Ascending aorta (tissue), 2 donors: ENCODE measurements at regions of chr7 and their contacts with region 1.

Region 1: GRCh38 chr7:90346336-90347125 is at the start of gene GTPBP10:
- DNase-seq: peak; percentile 60 to 95
- H3K4me3 ChIP-seq: peak within 1 kb of the TSS; percentile 69 to 74
- H3K27ac ChIP-seq: peak within 1 kb of the TSS; percentile 70 to 86
- H3K4me1 ChIP-seq: peaks cover 3 to 8% of the 10 kb centered on the region in 2 donors
- H3K27me3 ChIP-seq: no peaks in the 10 kb centered on the region
- CTCF ChIP-seq: peak; percentile 58 to 84 (median 80)
- total RNA-seq, gene GTPBP10: 4.5 TPM

Region 2: DNA sequence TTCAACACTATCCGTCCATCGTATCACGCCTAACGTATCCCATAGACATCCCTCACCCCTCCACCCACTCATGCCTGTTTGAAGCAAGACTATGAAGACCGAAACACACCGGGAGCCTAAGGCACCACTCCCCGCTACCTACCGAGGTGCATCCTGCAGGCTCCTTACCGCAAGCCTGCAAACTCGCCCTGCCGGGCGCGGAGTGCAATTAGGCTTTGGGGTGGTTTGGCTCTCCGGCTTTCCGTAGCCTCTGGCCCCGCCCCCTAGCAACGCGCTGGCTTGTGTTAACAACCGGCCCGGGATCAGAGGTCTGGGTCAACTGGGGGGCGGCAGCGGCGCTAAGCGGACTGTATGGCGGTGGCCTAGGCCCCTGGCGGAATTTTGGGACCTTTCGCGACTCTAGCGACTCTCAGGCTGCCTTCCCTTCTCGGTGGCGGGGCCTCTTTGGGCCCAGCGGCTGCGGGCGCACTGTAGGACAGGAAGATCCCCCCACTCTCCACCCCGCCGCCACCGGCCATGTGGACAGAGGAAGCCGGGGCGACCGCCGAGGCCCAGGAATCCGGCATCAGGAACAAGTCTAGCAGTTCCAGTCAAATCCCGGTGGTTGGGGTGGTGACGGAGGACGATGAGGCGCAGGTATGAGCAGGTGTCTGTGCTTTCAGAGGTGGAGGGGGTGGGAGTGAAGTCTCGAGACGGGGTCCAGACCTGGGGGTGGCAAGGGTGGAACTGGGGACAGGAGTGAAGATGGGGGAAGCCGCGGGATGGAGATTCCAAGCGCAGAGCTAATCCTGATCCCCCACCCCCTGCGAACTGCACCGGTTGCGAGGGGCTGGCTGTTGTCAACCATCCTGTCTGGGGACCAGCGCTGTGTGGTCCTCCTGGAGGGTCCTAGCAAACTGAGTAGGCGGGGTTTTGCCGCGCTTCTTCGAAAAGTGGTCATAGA is 101.4 kb before region 1 on chr7 and contains the start of gene CFAP69:
- intact Hi-C with region 1: loop called (anchors 5 kb)
- DNase-seq: peak; percentile 37 to 96
- H3K4me3 ChIP-seq: peak within 1 kb of the TSS; percentile 88 to 90
- H3K27ac ChIP-seq: peak within 1 kb of the TSS in 1 of 2 donors; percentile 48
- H3K4me1 ChIP-seq: peaks cover 3 to 8% of the 10 kb centered on the region in 2 donors
- H3K27me3 ChIP-seq: no peaks in the 10 kb centered on the region
- CTCF ChIP-seq: peak in 2 of 3 experiments; percentile 20 to 28
- total RNA-seq, gene CFAP69: 0.85 TPM

Region 3: GRCh38 chr7:90403174-90404113 is 56.9 kb after region 1 on chr7 and contains the start of gene CLDN12:
- intact Hi-C with region 1: loop called (anchors 1 kb)
- DNase-seq: peak; percentile 61 to 91
- H3K4me3 ChIP-seq: peak within 1 kb of the TSS; percentile 63 to 69
- H3K27ac ChIP-seq: peak within 1 kb of the TSS; percentile 84 to 88
- H3K4me1 ChIP-seq: no peaks in the 10 kb centered on the region
- H3K27me3 ChIP-seq: no peaks in the 10 kb centered on the region
- CTCF ChIP-seq: no peak
- total RNA-seq, gene CLDN12: 55.3 TPM